GM10248 (cell line): ENCODE measurements at regions of chr1 and their contacts with region 1.

Region 1: DNA sequence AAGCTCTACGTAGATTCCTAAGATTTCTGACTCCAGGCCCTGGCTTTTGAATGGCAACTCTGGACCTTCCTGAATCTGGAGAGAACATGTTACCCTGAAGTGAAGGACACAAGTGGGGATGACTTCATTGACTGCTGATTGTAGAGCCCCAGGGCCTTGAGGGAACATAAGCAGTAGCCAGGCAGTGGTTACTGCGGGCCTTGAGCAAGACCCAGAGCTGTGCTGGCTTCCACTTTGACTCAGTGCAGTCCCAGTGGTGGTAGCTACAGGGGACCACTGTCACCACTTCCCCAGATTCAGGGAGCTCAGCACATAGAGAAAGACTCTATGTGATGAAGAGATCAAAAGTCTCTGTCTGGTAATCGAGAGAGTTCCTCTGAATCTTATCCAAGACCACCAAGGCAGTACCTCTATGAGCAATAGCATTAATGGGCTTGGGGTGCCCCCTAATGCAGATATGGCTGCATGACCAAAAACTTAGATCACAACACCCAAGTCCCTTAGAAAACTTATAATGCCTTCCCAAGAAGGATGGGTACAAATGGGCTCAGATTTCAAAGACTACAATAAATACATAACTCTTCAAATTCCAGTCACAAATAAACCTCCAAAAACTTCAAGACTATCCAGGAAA is 1278.3 kb downstream of the AMY1C start:
- DNase-seq: no peak
- CTCF ChIP-seq: peak; percentile 57

Region 2: DNA sequence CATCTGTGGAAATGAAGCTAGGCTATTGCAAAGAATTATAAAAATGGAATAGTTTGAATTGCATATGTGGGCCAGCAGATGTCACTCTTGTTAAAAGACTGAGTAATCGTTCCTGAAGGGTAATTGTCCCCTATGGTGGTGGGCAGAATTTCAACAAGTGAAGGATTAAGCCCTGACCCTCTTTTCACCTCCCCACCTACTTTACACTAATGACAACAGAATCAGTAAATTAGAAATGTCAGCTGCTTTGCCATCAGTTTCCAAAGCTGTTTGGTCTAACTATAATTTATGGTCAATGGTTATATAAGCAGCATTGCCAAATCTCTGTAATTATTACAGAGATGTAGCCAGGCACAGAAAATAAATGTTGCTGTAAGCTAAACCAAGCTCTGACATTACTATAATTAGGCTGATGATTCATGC is 379.7 kb before region 1 on chr1:
- CTCF ChIA-PET with region 1: interaction called, 18 read pairs
- POLR2A ChIA-PET with region 1: no interaction called
- DNase-seq: peak; percentile 16
- CTCF ChIP-seq: peak; percentile 53

Region 3: DNA sequence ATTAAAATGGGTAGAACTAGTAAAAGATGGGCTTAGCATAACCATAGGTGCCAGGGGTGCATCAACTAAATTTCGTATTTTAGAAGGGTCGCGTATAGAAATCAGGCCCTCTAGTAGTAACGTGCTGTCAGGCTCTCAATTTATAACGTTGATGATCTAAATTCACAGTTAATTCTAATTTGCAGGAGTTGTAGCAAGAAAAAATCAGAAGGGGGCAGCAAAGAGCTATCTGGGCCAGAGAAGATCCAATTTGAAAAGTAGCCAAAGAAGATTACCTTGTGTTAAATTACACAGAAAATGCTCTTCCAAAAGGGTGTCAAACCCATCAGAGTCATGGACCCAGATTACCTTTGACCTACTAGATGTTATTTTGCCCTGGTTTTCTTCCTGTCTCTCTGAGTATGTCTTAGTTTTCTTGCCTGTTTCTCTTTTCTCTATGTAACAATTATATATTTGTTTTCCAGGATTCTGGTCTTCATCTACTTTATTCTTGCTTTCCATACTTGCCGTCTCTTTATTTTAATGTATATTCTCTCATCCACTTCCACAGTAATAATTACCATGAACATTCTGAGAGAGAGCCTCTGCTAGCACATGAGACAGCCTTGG is 247.4 kb before region 1 on chr1:
- CTCF ChIA-PET with region 1: interaction called, 29 read pairs
- POLR2A ChIA-PET with region 1: no interaction called
- DNase-seq: peak; percentile 31
- CTCF ChIP-seq: peak; percentile 65

Region 4: DNA sequence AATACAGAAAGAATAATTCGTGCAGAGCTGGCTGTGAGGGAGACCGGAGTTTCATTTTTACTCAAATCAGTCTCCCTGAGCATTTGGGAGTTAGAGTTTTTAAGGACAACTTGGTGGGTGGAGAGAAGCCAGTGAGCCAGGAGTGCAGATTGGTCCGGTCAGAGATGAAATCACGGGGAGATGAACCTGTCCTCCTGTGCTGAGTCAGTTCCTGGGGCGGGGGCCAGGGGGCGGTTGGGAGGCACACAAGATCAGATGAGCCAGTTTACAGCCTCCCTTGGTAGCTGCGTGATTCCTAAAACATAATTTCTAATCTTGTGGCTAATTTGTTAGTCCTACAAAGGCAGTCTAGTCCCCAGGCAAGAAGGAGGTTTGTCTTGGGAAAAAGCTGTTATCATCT is 10.4 kb before region 1 on chr1:
- CTCF ChIA-PET with region 1: interaction called, 15 read pairs
- POLR2A ChIA-PET with region 1: no interaction called
- DNase-seq: no peak
- CTCF ChIP-seq: no peak